Naive thymus-derived CD4-positive, alpha-beta T cell (primary cell): ENCODE measurements at regions of chr14 and their contacts with region 1.

Region 1: GRCh38 chr14:22491683-22492621 is 97.1 kb downstream of the DAD1 start:
- DNase-seq: peak in 1 of 9 donors; percentile 68
- ATAC-seq: peak; percentile 79
- H3K4me3 ChIP-seq: peak overlapping the region; percentile 67
- H3K4me3 Mint-ChIP-seq: peak overlapping the region; percentile 79 to 96 (median 89)
- H3K27ac ChIP-seq: peak overlapping the region; percentile 90
- H3K27ac Mint-ChIP-seq: peak overlapping the region; percentile 68 to 97 (median 95)
- H3K4me1 ChIP-seq: no peaks in the 10 kb centered on the region
- H3K4me1 Mint-ChIP-seq: peaks cover 5 to 52% (median 12%) of the 10 kb centered on the region in 7 donors
- H3K27me3 ChIP-seq: no peaks in the 10 kb centered on the region
- H3K27me3 Mint-ChIP-seq: no peaks in the 10 kb centered on the region

Region 2: GRCh38 chr14:21987937-21988336 is 504.0 kb before region 1 on chr14:
- CTCF ChIA-PET with region 1: no interaction called
- POLR2A ChIA-PET with region 1: no interaction called
- intact Hi-C with region 1: loop called in 1 of 2 experiments (anchors 5 kb)
- DNase-seq: peak in 1 of 9 donors; percentile 13
- ATAC-seq: peak; percentile 54
- H3K4me3 ChIP-seq: no peak overlapping the region
- H3K4me3 Mint-ChIP-seq: peak overlapping the region in 5 of 10 donors; percentile 16 to 60 (median 22)
- H3K27ac ChIP-seq: no peak overlapping the region
- H3K27ac Mint-ChIP-seq: peak overlapping the region in 5 of 9 donors; percentile 25 to 74 (median 45)
- H3K4me1 ChIP-seq: no peaks in the 10 kb centered on the region
- H3K4me1 Mint-ChIP-seq: peaks cover 0 to 31% (median 11%) of the 10 kb centered on the region in 7 donors
- H3K27me3 ChIP-seq: no peaks in the 10 kb centered on the region
- H3K27me3 Mint-ChIP-seq: peaks cover 0 to 17% (median 0%) of the 10 kb centered on the region in 5 donors

Region 3: DNA sequence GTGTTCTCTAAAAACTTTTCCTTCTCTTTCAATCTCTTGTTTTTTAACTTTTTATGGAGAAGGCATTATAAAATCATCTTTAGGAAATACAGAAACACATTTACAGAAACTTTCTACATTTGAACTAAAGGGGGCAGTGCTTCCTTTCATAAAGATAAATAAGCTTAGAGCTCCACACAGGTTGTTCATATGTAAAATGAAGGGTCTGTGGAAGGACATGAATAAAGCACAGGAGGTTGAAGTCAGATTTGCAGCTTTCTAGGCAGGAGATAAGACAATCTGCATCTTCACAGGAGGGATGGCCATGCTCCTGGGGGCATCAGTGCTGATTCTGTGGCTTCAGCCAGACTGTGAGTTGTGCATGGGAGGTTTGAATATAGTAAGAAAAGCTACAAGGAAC is 328.9 kb before region 1 on chr14:
- CTCF ChIA-PET with region 1: no interaction called
- POLR2A ChIA-PET with region 1: no interaction called
- intact Hi-C with region 1: loop called in 1 of 2 experiments (anchors 5 kb)
- DNase-seq: peak in 4 of 9 donors; percentile 0 to 31 (median 23)
- ATAC-seq: peak; percentile 46
- H3K4me3 ChIP-seq: peak overlapping the region; percentile 20
- H3K4me3 Mint-ChIP-seq: peak overlapping the region; percentile 47 to 92 (median 88)
- H3K27ac ChIP-seq: no peak overlapping the region
- H3K27ac Mint-ChIP-seq: peak overlapping the region; percentile 29 to 91 (median 81)
- H3K4me1 ChIP-seq: no peaks in the 10 kb centered on the region
- H3K4me1 Mint-ChIP-seq: peaks cover 0 to 25% (median 20%) of the 10 kb centered on the region in 7 donors
- H3K27me3 ChIP-seq: no peaks in the 10 kb centered on the region
- H3K27me3 Mint-ChIP-seq: peaks cover 0 to 4% (median 0%) of the 10 kb centered on the region in 5 donors

Region 4: GRCh38 chr14:22314181-22314820 is 177.7 kb before region 1 on chr14:
- CTCF ChIA-PET with region 1: no interaction called
- POLR2A ChIA-PET with region 1: interaction called, 3 read pairs
- intact Hi-C with region 1: loop called in 1 of 2 experiments (anchors 10 kb)
- DNase-seq: peak in 3 of 9 donors; percentile 4 to 32 (median 19)
- ATAC-seq: peak; percentile 76
- H3K4me3 ChIP-seq: no peak overlapping the region
- H3K4me3 Mint-ChIP-seq: peak overlapping the region in 7 of 10 donors; percentile 42 to 83 (median 60)
- H3K27ac ChIP-seq: no peak overlapping the region
- H3K27ac Mint-ChIP-seq: peak overlapping the region in 5 of 9 donors; percentile 59 to 80 (median 73)
- H3K4me1 ChIP-seq: no peaks in the 10 kb centered on the region
- H3K4me1 Mint-ChIP-seq: peaks cover 0 to 4% (median 0%) of the 10 kb centered on the region in 7 donors
- H3K27me3 ChIP-seq: no peaks in the 10 kb centered on the region
- H3K27me3 Mint-ChIP-seq: no peaks in the 10 kb centered on the region

Region 5: DNA sequence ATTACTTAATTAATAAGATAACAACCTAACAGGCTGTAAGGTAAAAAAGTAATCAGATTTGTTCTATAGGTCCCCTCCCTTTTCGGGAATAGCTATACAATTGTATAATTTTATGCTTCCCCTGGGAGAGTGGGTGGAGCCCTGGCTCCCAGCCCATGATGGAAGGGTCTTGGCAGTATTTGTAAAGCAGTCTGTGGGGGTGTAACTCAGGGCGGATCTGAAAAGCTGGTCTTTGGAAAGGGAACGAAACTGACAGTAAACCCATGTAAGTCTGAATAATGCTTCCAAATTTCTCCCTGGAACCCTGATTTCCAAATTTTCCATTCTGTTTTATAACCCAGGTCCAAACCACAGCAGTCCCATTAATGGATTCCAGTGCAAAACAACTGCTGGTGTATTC is 13.3 kb before region 1 on chr14:
- CTCF ChIA-PET with region 1: no interaction called
- POLR2A ChIA-PET with region 1: interaction called, 31 read pairs
- intact Hi-C with region 1: no loop called
- DNase-seq: no peak
- ATAC-seq: no peak
- H3K4me3 ChIP-seq: no peak overlapping the region
- H3K4me3 Mint-ChIP-seq: peak overlapping the region in 9 of 10 donors; percentile 47 to 86 (median 81)
- H3K27ac ChIP-seq: no peak overlapping the region
- H3K27ac Mint-ChIP-seq: peak overlapping the region in 4 of 9 donors; percentile 33 to 85 (median 50)
- H3K4me1 ChIP-seq: no peaks in the 10 kb centered on the region
- H3K4me1 Mint-ChIP-seq: peaks cover 0 to 38% (median 0%) of the 10 kb centered on the region in 7 donors
- H3K27me3 ChIP-seq: no peaks in the 10 kb centered on the region
- H3K27me3 Mint-ChIP-seq: no peaks in the 10 kb centered on the region